Panc1 (cell line): ENCODE measurements at regions of chr9 and their contacts with region 1.

Region 1: GRCh38 chr9:98056269-98057137 is at the start of gene NANS:
- DNase-seq: peak; percentile 56
- ATAC-seq: peak; percentile 98
- H3K4me3 ChIP-seq: peak within 1 kb of the TSS; percentile 73 to 83
- H3K27ac ChIP-seq: peak within 1 kb of the TSS; percentile 83
- H3K4me1 ChIP-seq: 0 out of 2 replicates have a peak, but pooled peaks cover 4% of the 10 kb centered on the region
- H3K27me3 ChIP-seq: no peaks in the 10 kb centered on the region
- CTCF ChIP-seq: no peak
- total RNA-seq, gene NANS: 41.0 TPM

Region 2: DNA sequence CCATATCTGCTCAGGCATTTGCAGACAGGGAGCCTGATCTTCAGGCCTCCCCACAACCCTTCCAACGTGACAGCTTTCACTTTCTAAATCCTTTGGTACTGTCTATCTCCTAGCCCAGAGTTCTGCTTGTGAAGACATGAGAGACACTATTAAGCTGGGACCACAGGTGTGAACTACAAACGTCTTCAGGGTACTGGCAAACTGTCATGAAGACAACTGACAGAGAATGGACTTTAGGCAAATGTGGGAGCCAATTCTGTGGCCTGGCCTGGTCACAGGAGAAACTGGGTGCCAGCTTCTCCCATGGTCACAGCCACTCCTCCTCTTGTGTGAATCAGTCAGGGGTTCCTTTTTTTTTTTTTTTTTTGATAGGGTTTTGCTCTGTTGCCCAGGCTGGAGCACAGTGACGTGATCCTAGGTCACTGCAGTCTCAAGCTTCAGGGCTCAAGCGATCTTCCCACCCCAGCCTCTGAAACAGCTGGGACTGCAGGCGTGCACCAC is 52.1 kb after region 1 on chr9:
- CTCF ChIA-PET with region 1: no interaction called
- POLR2A ChIA-PET with region 1: no interaction called
- in situ Hi-C with region 1: no loop called
- intact Hi-C with region 1: no loop called
- DNase-seq: no peak
- ATAC-seq: no peak
- H3K4me3 ChIP-seq: no peak overlapping the region
- H3K27ac ChIP-seq: no peak overlapping the region
- H3K4me1 ChIP-seq: no peaks in the 10 kb centered on the region
- H3K27me3 ChIP-seq: no peaks in the 10 kb centered on the region
- CTCF ChIP-seq: no peak

Region 3: DNA sequence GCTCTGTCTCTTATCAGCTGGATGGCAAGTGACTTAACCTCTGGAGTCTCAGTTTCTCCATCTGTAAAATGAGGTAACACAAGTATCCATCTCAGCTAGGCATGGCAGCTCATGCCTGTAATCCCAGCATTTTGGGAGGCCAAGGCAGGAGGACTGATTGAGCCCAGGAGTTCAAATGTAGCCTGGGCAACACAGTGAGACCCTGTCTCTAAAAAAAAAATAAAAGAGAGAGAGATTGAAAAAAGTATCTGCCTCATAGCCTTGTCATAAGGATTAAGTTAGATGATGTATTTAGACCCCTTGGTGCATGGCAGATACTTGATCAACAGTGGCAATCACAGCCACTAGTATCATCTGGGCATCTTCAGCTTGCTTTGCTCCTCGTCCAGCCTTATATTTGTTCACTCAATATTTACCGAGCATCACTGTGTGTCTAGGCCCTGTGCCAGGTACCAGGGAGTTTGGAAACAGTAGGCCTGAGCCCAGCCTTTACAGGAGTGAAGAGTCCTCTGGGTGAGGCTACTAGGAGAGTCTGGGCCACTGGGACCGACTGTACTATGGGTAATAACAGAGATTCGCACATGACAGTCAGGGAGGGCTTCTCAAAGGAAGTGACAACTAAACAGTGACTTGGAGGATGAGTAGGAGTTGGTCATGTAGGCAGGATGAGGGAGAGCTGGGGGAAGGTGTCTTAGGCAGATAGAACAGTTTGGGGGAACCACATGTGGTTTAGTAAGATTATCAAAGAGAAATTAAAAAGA is 101.7 kb after region 1 on chr9:
- CTCF ChIA-PET with region 1: no interaction called
- POLR2A ChIA-PET with region 1: no interaction called
- in situ Hi-C with region 1: no loop called
- intact Hi-C with region 1: no loop called
- DNase-seq: no peak
- ATAC-seq: no peak
- H3K4me3 ChIP-seq: no peak overlapping the region
- H3K27ac ChIP-seq: no peak overlapping the region
- H3K4me1 ChIP-seq: 0 out of 2 replicates have a peak, but pooled peaks cover 6% of the 10 kb centered on the region
- H3K27me3 ChIP-seq: no peaks in the 10 kb centered on the region
- CTCF ChIP-seq: no peak

Region 4: GRCh38 chr9:98437458-98438034 is 381.0 kb after region 1 on chr9:
- CTCF ChIA-PET with region 1: no interaction called
- POLR2A ChIA-PET with region 1: interaction called, 15 read pairs
- in situ Hi-C with region 1: no loop called
- intact Hi-C with region 1: no loop called
- DNase-seq: no peak
- ATAC-seq: no peak
- H3K4me3 ChIP-seq: no peak overlapping the region
- H3K27ac ChIP-seq: no peak overlapping the region
- H3K4me1 ChIP-seq: no peaks in the 10 kb centered on the region
- H3K27me3 ChIP-seq: no peaks in the 10 kb centered on the region
- CTCF ChIP-seq: no peak